H1 (cell line): ENCODE measurements at regions of chr14 and their contacts with region 1.

Region 1: GRCh38 chr14:67285876-67286452 is 44.7 kb downstream of the PALS1 start:
- DNase-seq: no peak
- H3K4me3 ChIP-seq: no peak overlapping the region
- H3K27ac ChIP-seq: no peak overlapping the region
- H3K4me1 ChIP-seq: no peaks in the 10 kb centered on the region
- H3K27me3 ChIP-seq: no peaks in the 10 kb centered on the region
- CTCF ChIP-seq: peak in 1 of 3 experiments; percentile 33; a peak in 2 of 4 replicates
- EP300 ChIP-seq: no peak
- POLR2A ChIP-seq: no peak
- RAD21 ChIP-seq: peak in 1 of 2 experiments; percentile 54; a peak in 3 of 4 replicates

Region 2: GRCh38 chr14:67166450-67166853 is 119.5 kb before region 1 on chr14:
- CTCF ChIA-PET with region 1: interaction called, 61 read pairs
- POLR2A ChIA-PET with region 1: interaction called, 3 read pairs
- DNase-seq: no peak
- H3K4me3 ChIP-seq: no peak overlapping the region
- H3K27ac ChIP-seq: no peak overlapping the region
- H3K4me1 ChIP-seq: no peaks in the 10 kb centered on the region
- H3K27me3 ChIP-seq: no peaks in the 10 kb centered on the region
- CTCF ChIP-seq: peak in 2 of 3 experiments; percentile 68 to 80; a peak in 2 of 4 replicates
- EP300 ChIP-seq: no peak
- POLR2A ChIP-seq: no peak
- RAD21 ChIP-seq: peak; percentile 86 to 90

Region 3: GRCh38 chr14:67251573-67252226 is 34.3 kb before region 1 on chr14:
- CTCF ChIA-PET with region 1: interaction called, 11 read pairs
- POLR2A ChIA-PET with region 1: interaction called, 3 read pairs
- DNase-seq: no peak
- H3K4me3 ChIP-seq: no peak overlapping the region
- H3K27ac ChIP-seq: no peak overlapping the region
- H3K4me1 ChIP-seq: no peaks in the 10 kb centered on the region; a peak in 1 of 7 replicates
- H3K27me3 ChIP-seq: no peaks in the 10 kb centered on the region
- CTCF ChIP-seq: no peak
- EP300 ChIP-seq: no peak
- POLR2A ChIP-seq: no peak
- RAD21 ChIP-seq: no peak

Region 4: GRCh38 chr14:67269298-67270061 is 16.5 kb before region 1 on chr14:
- CTCF ChIA-PET with region 1: interaction called, 28 read pairs
- POLR2A ChIA-PET with region 1: interaction called, 3 read pairs
- DNase-seq: no peak
- H3K4me3 ChIP-seq: peak overlapping the region in 1 of 4 experiments; percentile 41; a peak in 3 of 8 replicates
- H3K27ac ChIP-seq: peak overlapping the region; percentile 62
- H3K4me1 ChIP-seq: peaks cover 5 to 14% (median 8%) of the 10 kb centered on the region in 4 experiments; a peak in 6 of 7 replicates
- H3K27me3 ChIP-seq: no peaks in the 10 kb centered on the region
- CTCF ChIP-seq: no peak
- EP300 ChIP-seq: no peak
- POLR2A ChIP-seq: no peak
- RAD21 ChIP-seq: no peak

Region 5: GRCh38 chr14:67319142-67319541 is 33.2 kb after region 1 on chr14:
- CTCF ChIA-PET with region 1: interaction called, 10 read pairs
- POLR2A ChIA-PET with region 1: no interaction called
- DNase-seq: no peak
- H3K4me3 ChIP-seq: no peak overlapping the region
- H3K27ac ChIP-seq: no peak overlapping the region
- H3K4me1 ChIP-seq: no peaks in the 10 kb centered on the region
- H3K27me3 ChIP-seq: no peaks in the 10 kb centered on the region
- CTCF ChIP-seq: no peak
- EP300 ChIP-seq: no peak
- POLR2A ChIP-seq: no peak
- RAD21 ChIP-seq: no peak